Dorsolateral prefrontal cortex (tissue), 120 donors: ENCODE measurements at regions of chr5 and their contacts with region 1.

Region 1: GRCh38 chr5:43105369-43106289 is 15.1 kb upstream of the ZNF131 start:
- DNase-seq: peak; percentile 77 to 87 (median 84)
- H3K4me3 ChIP-seq: peak overlapping the region; percentile 8 to 74 (median 55)
- H3K27ac ChIP-seq: peak overlapping the region in 55 of 59 donors; percentile 2 to 89 (median 69)
- H3K27me3 ChIP-seq: no peaks in the 10 kb centered on the region
- CTCF ChIP-seq: peak; percentile 85 to 100 (median 98)

Region 2: GRCh38 chr5:42840269-42840668 is 265.4 kb before region 1 on chr5:
- intact Hi-C with region 1: no loop called
- DNase-seq: no peak
- H3K4me3 ChIP-seq: peak overlapping the region in 13 of 59 donors; percentile 2 to 43 (median 24)
- H3K27ac ChIP-seq: peak overlapping the region in 28 of 59 donors; percentile 6 to 70 (median 38)
- H3K27me3 ChIP-seq: no peaks in the 10 kb centered on the region
- CTCF ChIP-seq: no peak

Region 3: GRCh38 chr5:42908509-42909488 is 196.8 kb before region 1 on chr5:
- intact Hi-C with region 1: loop called in 1 of 2 experiments (anchors 10 kb)
- DNase-seq: peak; percentile 71 to 91 (median 89)
- H3K4me3 ChIP-seq: peak overlapping the region; percentile 40 to 94 (median 65)
- H3K27ac ChIP-seq: peak overlapping the region in 10 of 59 donors; percentile 2 to 70 (median 27)
- H3K27me3 ChIP-seq: no peaks in the 10 kb centered on the region
- CTCF ChIP-seq: peak; percentile 58 to 94 (median 86)